WTC11 (cell line): ENCODE measurements at regions of chr19 and their contacts with region 1.

Region 1: GRCh38 chr19:6048808-6049405 is 61.4 kb downstream of the RFX2 start:
- DNase-seq: peak; percentile 78
- ATAC-seq: peak; percentile 93
- H3K4me3 Mint-ChIP-seq: no peak overlapping the region
- H3K27ac Mint-ChIP-seq: no peak overlapping the region
- H3K4me1 Mint-ChIP-seq: peaks cover 12% of the 10 kb centered on the region; the same call in 1 of the 2 replicates
- H3K27me3 Mint-ChIP-seq: peaks cover 6% of the 10 kb centered on the region; the same call in 1 of the 2 replicates
- CTCF ChIP-seq: peak; percentile 75

Region 2: GRCh38 chr19:5822181-5822844 is 226.6 kb before region 1 on chr19:
- CTCF ChIA-PET with region 1: no interaction called
- POLR2A ChIA-PET with region 1: no interaction called
- DNase-seq: no peak
- ATAC-seq: no peak
- H3K4me3 Mint-ChIP-seq: no peak overlapping the region
- H3K27ac Mint-ChIP-seq: no peak overlapping the region
- H3K4me1 Mint-ChIP-seq: peaks cover 5% of the 10 kb centered on the region
- H3K27me3 Mint-ChIP-seq: no peaks in the 10 kb centered on the region; the same call in none of the 2 replicates
- CTCF ChIP-seq: no peak

Region 3: GRCh38 chr19:6062274-6062673 is 13.4 kb after region 1 on chr19:
- CTCF ChIA-PET with region 1: interaction called, 14 read pairs
- POLR2A ChIA-PET with region 1: no interaction called
- DNase-seq: no peak
- ATAC-seq: no peak
- H3K4me3 Mint-ChIP-seq: no peak overlapping the region
- H3K27ac Mint-ChIP-seq: no peak overlapping the region
- H3K4me1 Mint-ChIP-seq: peaks cover 19% of the 10 kb centered on the region
- H3K27me3 Mint-ChIP-seq: peaks cover 3% of the 10 kb centered on the region; the same call in 1 of the 2 replicates
- CTCF ChIP-seq: no peak

Region 4: GRCh38 chr19:6076675-6077463 is 28.0 kb after region 1 on chr19:
- CTCF ChIA-PET with region 1: interaction called, 11 read pairs
- POLR2A ChIA-PET with region 1: no interaction called
- DNase-seq: no peak
- ATAC-seq: no peak
- H3K4me3 Mint-ChIP-seq: no peak overlapping the region
- H3K27ac Mint-ChIP-seq: no peak overlapping the region
- H3K4me1 Mint-ChIP-seq: peaks cover 5% of the 10 kb centered on the region; the same call in 1 of the 2 replicates
- H3K27me3 Mint-ChIP-seq: peaks cover 5% of the 10 kb centered on the region; the same call in 1 of the 2 replicates
- CTCF ChIP-seq: no peak